ENCODE measurements at regions of chr9 and their contacts with region 1.

Region 1: DNA sequence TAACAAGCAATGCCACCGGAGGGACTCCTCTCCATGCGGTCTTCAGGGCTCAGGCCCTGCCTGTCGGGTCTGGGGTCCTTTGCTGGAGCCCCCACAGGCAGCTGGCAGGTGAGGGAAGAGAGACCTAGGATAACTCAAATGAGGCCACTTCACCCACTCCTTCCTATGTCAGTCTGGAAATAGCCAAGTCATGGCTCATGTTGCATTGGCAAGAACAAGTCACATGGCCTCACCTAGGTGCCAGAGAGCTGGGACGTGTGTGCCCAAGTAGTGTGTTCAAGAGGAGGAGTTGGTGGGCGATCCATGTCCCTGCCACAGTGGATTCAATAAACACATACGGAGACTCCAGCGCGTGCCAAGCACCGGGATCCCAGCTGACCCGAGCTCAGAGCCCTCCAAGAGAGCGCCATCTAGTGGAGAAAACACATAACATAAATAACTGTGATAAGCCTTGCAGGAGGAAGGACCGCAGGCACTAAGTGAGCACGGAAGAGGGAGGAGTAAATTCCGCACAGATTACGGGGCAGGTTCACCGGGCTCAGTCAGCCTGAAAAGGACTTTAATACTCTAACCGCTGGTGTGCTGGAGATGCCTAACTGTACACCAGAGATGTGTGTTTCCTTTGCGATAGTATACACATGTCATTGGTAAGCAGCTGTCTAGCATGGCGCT is 580.8 kb downstream of the CCDC171 start:
- DNase-seq: peak; percentile 20
- H3K4me3 ChIP-seq: no peak overlapping the region
- H3K27ac ChIP-seq: peak overlapping the region in 1 of 4 donors; percentile 41
- H3K4me1 ChIP-seq: peaks cover 0 to 6% (median 0%) of the 10 kb centered on the region in 4 donors
- H3K27me3 ChIP-seq: no peaks in the 10 kb centered on the region
- CTCF ChIP-seq: peak; percentile 23 to 61 (median 43)
- EP300 ChIP-seq: no peak
- POLR2A ChIP-seq: no peak

Region 2: GRCh38 chr9:15873569-15874177 is 260.0 kb before region 1 on chr9:
- in situ Hi-C with region 1: loop called in 1 of 4 experiments (anchors 25 kb)
- intact Hi-C with region 1: no loop called
- DNase-seq: no peak
- H3K4me3 ChIP-seq: no peak overlapping the region
- H3K27ac ChIP-seq: no peak overlapping the region
- H3K4me1 ChIP-seq: no peaks in the 10 kb centered on the region
- H3K27me3 ChIP-seq: no peaks in the 10 kb centered on the region
- CTCF ChIP-seq: peak; percentile 50 to 69 (median 57)
- EP300 ChIP-seq: no peak
- POLR2A ChIP-seq: no peak

Measured in transverse colon (tissue), 4 donors.